ENCODE measurements at regions of chr1 and their contacts with region 1.

Region 1: DNA sequence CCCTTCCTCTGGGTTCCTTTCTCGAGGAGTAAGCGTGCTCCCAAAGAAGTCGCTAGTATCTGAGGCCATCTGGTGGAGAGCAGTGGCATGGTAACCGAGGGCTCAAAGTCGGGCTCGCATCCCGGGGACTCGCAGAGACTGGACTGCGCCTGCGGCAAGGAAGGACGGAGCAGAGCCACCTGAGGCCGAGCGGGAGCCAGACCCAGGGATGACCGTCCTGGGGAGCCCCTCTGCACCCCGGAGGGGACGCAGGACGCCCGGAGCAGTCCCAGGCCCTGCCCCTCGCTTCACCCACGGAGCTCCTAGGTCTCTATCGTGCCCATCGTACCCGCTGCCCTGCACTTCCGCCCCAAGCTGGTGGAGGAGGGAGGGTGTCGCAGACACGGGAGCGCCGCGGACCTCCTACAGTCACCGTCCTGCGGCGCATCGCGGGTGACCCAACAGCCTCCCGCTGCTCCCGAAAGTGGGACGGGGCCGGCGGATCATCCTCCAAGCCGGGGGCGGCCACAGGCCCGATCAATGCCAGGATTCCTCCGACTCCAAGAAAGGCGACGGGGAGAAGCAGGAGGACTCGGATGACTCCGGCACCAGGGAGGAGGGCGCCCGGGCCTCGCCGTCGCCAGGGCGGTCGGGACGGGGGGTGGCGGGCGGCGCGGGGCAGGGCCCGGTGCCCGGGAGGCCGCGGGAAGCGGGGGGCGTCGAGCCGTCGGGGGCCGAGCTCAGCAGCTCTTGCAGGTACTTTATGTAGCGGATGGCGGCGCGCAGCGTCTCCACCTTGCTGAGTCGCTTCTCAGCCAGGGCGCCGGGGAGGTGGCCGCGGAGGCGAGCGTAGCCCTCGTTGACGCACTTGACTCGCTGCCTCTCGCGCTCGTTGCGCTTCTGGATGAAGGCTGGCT is 2.3 kb upstream of the CACNA1S start:
- DNase-seq: peak; percentile 88
- ATAC-seq: peak; percentile 94
- H3K4me3 Mint-ChIP-seq: peak overlapping the region; percentile 78
- H3K27ac Mint-ChIP-seq: peak overlapping the region; percentile 83
- H3K4me1 Mint-ChIP-seq: peaks cover 2% of the 10 kb centered on the region
- H3K27me3 Mint-ChIP-seq: no peaks in the 10 kb centered on the region

Region 2: GRCh38 chr1:200971955-200972711 is 142.4 kb before region 1 on chr1:
- CTCF ChIA-PET with region 1: interaction called, 43 read pairs
- POLR2A ChIA-PET with region 1: no interaction called
- intact Hi-C with region 1: loop called (anchors 1 kb)
- DNase-seq: peak; percentile 78
- ATAC-seq: no peak
- H3K4me3 Mint-ChIP-seq: no peak overlapping the region
- H3K27ac Mint-ChIP-seq: no peak overlapping the region
- H3K4me1 Mint-ChIP-seq: no peaks in the 10 kb centered on the region
- H3K27me3 Mint-ChIP-seq: no peaks in the 10 kb centered on the region

Region 3: GRCh38 chr1:201042779-201043461 is 71.6 kb before region 1 on chr1:
- CTCF ChIA-PET with region 1: interaction called, 5 read pairs
- POLR2A ChIA-PET with region 1: no interaction called
- intact Hi-C with region 1: loop called in 1 of 2 experiments (anchors 1 kb)
- DNase-seq: peak; percentile 85
- ATAC-seq: peak; percentile 96
- H3K4me3 Mint-ChIP-seq: no peak overlapping the region
- H3K27ac Mint-ChIP-seq: no peak overlapping the region
- H3K4me1 Mint-ChIP-seq: no peaks in the 10 kb centered on the region
- H3K27me3 Mint-ChIP-seq: no peaks in the 10 kb centered on the region

Region 4: DNA sequence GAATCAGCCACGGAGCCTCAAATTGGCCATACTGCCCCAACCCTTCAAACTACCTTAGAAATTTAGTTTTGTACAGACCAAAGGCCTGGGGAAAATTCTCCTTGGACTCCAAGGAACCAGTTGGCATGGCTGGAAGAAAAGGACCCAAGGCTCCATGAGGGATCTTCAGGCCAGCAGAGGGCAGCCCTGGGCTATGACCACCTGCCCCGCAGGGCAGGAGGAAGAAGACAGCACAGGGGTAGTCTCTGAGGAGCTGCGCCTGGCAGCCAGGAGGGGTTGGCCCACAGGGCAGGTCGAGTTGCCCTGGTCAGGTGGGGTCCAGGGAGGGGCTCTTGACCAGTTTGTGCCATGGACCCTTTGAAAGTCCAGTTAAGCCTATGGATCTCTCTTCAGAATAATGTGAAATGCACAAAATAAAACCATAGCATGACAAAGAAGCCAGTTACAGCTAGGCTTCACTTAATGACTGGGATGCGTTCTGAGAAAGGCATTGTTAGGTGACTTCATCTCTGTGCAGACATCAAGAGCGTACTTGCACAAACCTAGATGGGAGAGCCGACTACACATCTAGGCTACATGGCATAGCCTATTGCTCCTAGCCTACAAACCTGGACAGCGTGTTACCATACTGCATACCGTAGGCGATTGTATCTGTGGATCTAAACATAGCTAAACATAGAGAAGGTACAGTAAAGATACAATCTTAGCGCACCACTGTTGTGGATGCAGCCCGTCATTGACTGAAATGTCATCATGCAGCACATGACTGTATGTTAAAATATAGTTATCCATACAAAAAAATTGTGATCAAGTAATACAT is 28.4 kb before region 1 on chr1:
- CTCF ChIA-PET with region 1: interaction called, 10 read pairs
- POLR2A ChIA-PET with region 1: no interaction called
- intact Hi-C with region 1: loop called (anchors 1 to 2 kb)
- DNase-seq: peak; percentile 66
- ATAC-seq: peak; percentile 78
- H3K4me3 Mint-ChIP-seq: no peak overlapping the region
- H3K27ac Mint-ChIP-seq: no peak overlapping the region
- H3K4me1 Mint-ChIP-seq: no peaks in the 10 kb centered on the region
- H3K27me3 Mint-ChIP-seq: no peaks in the 10 kb centered on the region

Region 5: GRCh38 chr1:201208236-201208635 is 93.8 kb after region 1 on chr1:
- CTCF ChIA-PET with region 1: no interaction called
- POLR2A ChIA-PET with region 1: no interaction called
- intact Hi-C with region 1: no loop called
- DNase-seq: no peak
- ATAC-seq: no peak
- H3K4me3 Mint-ChIP-seq: no peak overlapping the region
- H3K27ac Mint-ChIP-seq: no peak overlapping the region
- H3K4me1 Mint-ChIP-seq: no peaks in the 10 kb centered on the region
- H3K27me3 Mint-ChIP-seq: peaks cover 16% of the 10 kb centered on the region